ENCODE measurements at regions of chr1 and their contacts with region 1.

Region 1: DNA sequence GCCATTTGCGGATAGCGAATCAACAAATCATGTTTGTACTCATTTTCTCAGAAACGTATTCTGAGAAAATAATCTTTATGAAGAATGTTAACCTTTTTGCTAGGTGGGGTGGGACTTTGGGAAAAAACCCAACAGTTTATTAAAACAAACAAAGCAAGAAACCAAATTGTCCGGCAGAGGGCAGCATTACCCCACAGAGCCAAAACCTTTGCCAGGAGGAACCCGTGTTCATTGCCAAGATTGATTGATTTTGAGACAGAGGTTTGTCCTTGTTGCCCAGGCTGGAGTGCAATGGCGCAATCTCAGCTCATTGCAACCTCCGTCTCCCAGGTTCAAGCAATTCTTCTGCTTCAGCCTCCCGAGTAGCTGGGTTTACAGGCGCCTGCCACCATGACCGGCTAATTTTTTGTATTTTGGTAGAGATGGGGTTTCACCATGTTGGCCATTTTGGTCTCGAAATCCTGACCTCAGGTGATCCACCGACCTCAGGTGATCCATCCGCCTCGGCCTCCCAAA is 70.8 kb upstream of the RHOU start:
- DNase-seq: peak; percentile 58 to 86 (median 79)
- ATAC-seq: peak; percentile 48
- H3K4me3 ChIP-seq: no peak overlapping the region
- H3K4me3 Mint-ChIP-seq: no peak overlapping the region
- H3K27ac ChIP-seq: no peak overlapping the region
- H3K27ac Mint-ChIP-seq: no peak overlapping the region
- H3K4me1 ChIP-seq: no peaks in the 10 kb centered on the region
- H3K4me1 Mint-ChIP-seq: peaks cover 3% of the 10 kb centered on the region
- H3K27me3 ChIP-seq: no peaks in the 10 kb centered on the region
- H3K27me3 Mint-ChIP-seq: no peaks in the 10 kb centered on the region
- CTCF ChIP-seq: peak; percentile 90

Region 2: DNA sequence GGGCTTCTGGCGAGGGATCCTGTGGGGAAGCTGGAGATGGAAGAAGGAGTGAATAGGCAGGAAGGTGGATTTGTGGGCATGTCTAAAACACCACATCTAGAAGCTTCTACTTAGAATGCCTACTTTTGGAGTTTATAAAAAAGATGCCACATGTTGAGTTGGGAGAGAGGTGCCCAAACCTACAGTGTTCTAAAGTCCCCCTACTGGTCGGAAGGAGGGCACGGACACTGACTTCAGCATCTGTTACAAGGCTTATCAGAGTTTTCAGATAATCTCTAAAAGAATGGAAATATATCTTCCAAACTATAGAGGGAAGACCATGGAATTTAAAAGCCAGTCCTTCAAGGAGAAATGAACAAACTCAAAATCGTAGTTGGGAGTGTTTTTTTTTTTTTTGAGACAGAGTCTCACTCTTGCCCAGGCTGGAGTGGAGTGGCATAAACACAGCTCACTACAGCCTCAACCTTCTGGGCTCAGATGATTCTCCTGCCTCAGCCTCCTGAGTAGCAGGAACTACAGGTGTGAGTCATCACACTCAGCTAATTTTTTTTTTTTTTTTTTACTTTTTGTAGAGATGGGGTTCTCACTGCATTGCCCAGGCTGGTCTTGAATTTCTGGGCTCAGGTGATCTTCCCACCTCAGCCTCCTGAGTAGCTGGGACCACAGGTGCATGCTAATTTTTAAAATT is 484.0 kb before region 1 on chr1:
- CTCF ChIA-PET with region 1: no interaction called
- POLR2A ChIA-PET with region 1: no interaction called
- intact Hi-C with region 1: no loop called
- DNase-seq: peak in 3 of 9 experiments; percentile 9 to 47 (median 31)
- ATAC-seq: peak; percentile 58
- H3K4me3 ChIP-seq: no peak overlapping the region
- H3K4me3 Mint-ChIP-seq: no peak overlapping the region
- H3K27ac ChIP-seq: no peak overlapping the region
- H3K27ac Mint-ChIP-seq: no peak overlapping the region
- H3K4me1 ChIP-seq: peaks cover 2% of the 10 kb centered on the region
- H3K4me1 Mint-ChIP-seq: peaks cover 8% of the 10 kb centered on the region
- H3K27me3 ChIP-seq: no peaks in the 10 kb centered on the region
- H3K27me3 Mint-ChIP-seq: no peaks in the 10 kb centered on the region
- CTCF ChIP-seq: peak; percentile 28

Region 3: DNA sequence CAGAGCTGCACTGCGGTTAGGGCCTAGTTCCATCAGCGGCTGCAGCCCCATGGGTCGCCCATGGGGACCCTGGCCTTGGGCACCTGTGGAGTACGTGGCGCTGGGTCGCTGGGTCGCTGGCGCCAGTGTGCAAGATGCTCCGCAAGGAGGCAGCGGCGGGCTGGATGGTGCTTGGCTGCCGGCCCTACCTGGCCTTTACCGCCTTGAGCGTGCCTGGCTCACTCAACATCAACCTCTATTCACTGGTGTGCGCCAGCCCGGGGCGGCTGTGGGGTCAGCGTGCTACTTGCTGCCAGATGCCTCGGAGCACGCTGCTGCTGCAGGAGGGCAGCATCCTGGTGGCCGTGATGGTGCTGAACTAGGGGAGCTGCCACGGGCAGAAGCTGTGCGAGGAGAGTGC is 14.3 kb before region 1 on chr1:
- CTCF ChIA-PET with region 1: interaction called, 18 read pairs
- POLR2A ChIA-PET with region 1: no interaction called
- intact Hi-C with region 1: no loop called
- DNase-seq: peak in 2 of 9 experiments; percentile 16 to 17
- ATAC-seq: no peak
- H3K4me3 ChIP-seq: no peak overlapping the region
- H3K4me3 Mint-ChIP-seq: no peak overlapping the region
- H3K27ac ChIP-seq: no peak overlapping the region
- H3K27ac Mint-ChIP-seq: no peak overlapping the region
- H3K4me1 ChIP-seq: peaks cover 23% of the 10 kb centered on the region
- H3K4me1 Mint-ChIP-seq: peaks cover 24% of the 10 kb centered on the region
- H3K27me3 ChIP-seq: peaks cover 21 to 39% of the 10 kb centered on the region in 2 experiments
- H3K27me3 Mint-ChIP-seq: peaks cover 50% of the 10 kb centered on the region
- CTCF ChIP-seq: no peak

Region 4: DNA sequence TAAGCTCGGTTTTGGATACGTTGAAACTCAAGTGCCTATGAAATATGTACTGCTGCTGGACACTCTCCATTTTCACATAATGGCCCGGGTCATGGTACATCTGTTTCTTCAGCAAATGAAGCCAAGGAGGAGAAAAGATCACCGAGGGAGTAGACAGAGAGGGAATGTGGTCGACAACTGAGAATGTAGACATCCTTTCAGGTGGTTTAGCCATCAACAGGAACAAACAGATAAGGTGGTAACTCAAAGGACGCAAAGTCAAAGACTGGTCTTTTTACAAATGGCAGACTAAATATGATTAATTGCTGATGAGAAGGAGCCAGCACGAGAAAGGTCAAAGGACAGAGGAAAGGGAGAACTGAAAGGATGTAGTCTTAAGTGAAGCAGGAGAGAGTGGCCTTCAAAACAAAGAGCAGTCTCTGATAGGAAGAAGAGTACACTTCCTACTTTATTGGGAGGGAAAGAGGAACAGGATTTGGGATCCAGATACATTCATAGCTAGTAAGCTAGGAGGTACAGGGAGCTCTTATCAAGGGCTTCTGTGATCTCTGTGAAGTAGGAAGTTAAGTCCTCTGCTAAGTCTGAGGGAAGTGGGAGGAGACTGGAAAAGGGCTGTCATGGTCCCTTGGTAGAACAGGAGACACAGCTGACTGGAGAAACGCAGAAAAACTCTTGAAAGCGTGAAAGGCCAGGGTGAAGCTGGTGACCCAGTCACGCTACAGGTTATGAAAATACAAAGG is 815.4 kb after region 1 on chr1:
- CTCF ChIA-PET with region 1: interaction called, 17 read pairs
- POLR2A ChIA-PET with region 1: no interaction called
- intact Hi-C with region 1: loop called (anchors 1 kb)
- DNase-seq: peak in 1 of 9 experiments; percentile 23
- ATAC-seq: no peak
- H3K4me3 ChIP-seq: no peak overlapping the region
- H3K4me3 Mint-ChIP-seq: no peak overlapping the region
- H3K27ac ChIP-seq: no peak overlapping the region
- H3K27ac Mint-ChIP-seq: no peak overlapping the region
- H3K4me1 ChIP-seq: no peaks in the 10 kb centered on the region
- H3K4me1 Mint-ChIP-seq: peaks cover 13% of the 10 kb centered on the region
- H3K27me3 ChIP-seq: no peaks in the 10 kb centered on the region
- H3K27me3 Mint-ChIP-seq: no peaks in the 10 kb centered on the region
- CTCF ChIP-seq: no peak

Region 5: DNA sequence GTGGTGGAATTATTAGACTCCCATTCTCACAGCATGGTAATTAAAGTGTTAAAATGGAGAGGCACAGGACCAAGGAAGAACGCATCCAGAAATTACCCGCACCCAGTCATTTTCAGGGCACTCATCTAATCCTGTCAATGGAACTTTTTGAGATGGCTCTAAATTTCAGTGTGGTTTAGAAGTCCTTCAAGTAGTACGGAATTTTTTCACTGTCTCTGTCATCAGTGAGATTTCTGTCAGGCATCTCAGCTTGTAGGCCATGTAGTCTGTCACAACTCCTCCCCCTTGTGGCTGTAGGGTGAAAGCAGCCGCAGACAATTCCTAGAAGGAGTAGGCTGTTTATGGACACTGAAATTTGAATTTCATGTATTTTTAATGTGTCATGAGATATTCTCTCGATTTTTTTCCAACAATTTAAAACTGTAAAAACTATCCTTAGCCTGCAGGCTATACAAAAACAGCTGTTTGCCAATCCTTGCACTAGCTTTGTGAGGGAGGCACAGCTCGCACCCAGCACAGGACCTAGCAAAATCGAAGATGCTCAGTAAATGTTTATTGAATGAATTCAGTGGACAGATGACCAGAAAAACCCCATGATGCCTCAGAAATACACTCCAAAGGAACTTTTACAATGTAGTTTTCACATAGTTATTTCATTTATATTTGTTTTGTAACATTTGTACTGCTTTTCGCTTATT is 850.3 kb after region 1 on chr1:
- CTCF ChIA-PET with region 1: interaction called, 6 read pairs
- POLR2A ChIA-PET with region 1: no interaction called
- intact Hi-C with region 1: loop called in 1 of 2 experiments (anchors 1 kb)
- DNase-seq: peak; percentile 30 to 84 (median 66)
- ATAC-seq: peak; percentile 98
- H3K4me3 ChIP-seq: no peak overlapping the region
- H3K4me3 Mint-ChIP-seq: no peak overlapping the region
- H3K27ac ChIP-seq: no peak overlapping the region
- H3K27ac Mint-ChIP-seq: no peak overlapping the region
- H3K4me1 ChIP-seq: no peaks in the 10 kb centered on the region
- H3K4me1 Mint-ChIP-seq: peaks cover 5% of the 10 kb centered on the region
- H3K27me3 ChIP-seq: no peaks in the 10 kb centered on the region
- H3K27me3 Mint-ChIP-seq: no peaks in the 10 kb centered on the region
- CTCF ChIP-seq: peak; percentile 89